ENCODE measurements at regions of chr1 and their contacts with region 1.

Region 1: GRCh38 chr1:161382214-161383019 is 14.7 kb upstream of the CFAP126 start:
- DNase-seq: no peak
- ATAC-seq: peak; percentile 94
- H3K4me3 ChIP-seq: no peak overlapping the region
- H3K27ac ChIP-seq: no peak overlapping the region
- H3K4me1 ChIP-seq: peaks cover 14% of the 10 kb centered on the region; the same call in 1 of the 2 replicates
- H3K27me3 ChIP-seq: no peaks in the 10 kb centered on the region
- CTCF ChIP-seq: peak; percentile 39 to 75 (median 54); a peak in 5 of 6 replicates
- EP300 ChIP-seq: no peak
- POLR2A ChIP-seq: no peak
- RAD21 ChIP-seq: peak; percentile 78

Region 2: DNA sequence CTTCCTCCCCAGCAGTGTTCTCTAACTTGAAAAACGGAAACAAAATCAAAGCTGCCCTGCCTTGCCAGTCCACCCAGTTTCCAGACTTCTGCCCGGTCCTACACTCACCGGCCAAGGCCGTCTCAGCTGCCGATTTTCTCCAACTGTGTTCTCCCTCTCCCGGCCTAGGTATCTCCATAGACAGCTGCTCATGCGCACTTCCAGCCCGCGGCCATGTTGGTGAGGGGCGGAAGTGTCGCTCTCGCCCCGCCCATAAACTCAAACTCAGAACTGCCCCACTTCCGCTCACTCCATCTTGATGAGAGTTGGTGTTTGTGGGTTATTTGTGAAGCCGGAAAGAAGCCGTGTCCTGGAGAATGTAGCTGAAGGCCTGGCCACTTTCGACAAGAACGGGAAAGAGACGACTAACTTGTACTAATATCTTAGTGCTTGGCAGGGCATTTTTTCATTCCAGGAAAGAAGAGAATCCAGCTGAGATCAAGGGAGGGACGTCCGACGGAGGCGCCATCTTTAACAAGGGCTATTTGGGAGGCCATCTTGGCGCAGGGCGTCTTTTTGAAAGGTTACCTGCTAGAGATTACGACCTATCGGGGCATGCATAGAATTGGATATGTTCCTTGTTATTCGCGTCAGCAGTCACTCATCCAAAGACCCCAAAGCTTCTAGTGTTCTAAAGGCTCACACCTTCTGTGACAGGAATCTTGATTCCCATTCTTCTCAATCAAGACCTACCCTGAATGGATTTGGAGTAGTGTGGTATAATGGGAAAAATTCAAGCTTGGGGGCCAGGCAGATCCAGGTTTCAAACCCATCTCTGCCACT is 336.5 kb before region 1 on chr1 and contains the start of gene USF1:
- CTCF ChIA-PET with region 1: no interaction called
- POLR2A ChIA-PET with region 1: no interaction called
- RAD21 ChIA-PET with region 1: no interaction called
- SMC1A ChIA-PET with region 1: no interaction called
- in situ Hi-C with region 1: no loop called
- intact Hi-C with region 1: no loop called
- DNase-seq: peak; percentile 92
- ATAC-seq: peak; percentile 86
- H3K4me3 ChIP-seq: peak within 1 kb of the TSS; percentile 90
- H3K27ac ChIP-seq: peak within 1 kb of the TSS; percentile 100
- H3K4me1 ChIP-seq: peaks cover 15% of the 10 kb centered on the region
- H3K27me3 ChIP-seq: no peaks in the 10 kb centered on the region
- CTCF ChIP-seq: no peak
- EP300 ChIP-seq: no peak
- POLR2A ChIP-seq: peak; percentile 90
- RAD21 ChIP-seq: no peak
- polyA plus RNA-seq, gene USF1: 9.4 to 26.3 TPM

Region 3: GRCh38 chr1:161185282-161185682 is 197.1 kb before region 1 on chr1:
- CTCF ChIA-PET with region 1: interaction called, 113 read pairs
- POLR2A ChIA-PET with region 1: interaction called, 4 read pairs
- RAD21 ChIA-PET with region 1: interaction called, 4 read pairs
- SMC1A ChIA-PET with region 1: interaction called, 13 read pairs
- in situ Hi-C with region 1: no loop called
- intact Hi-C with region 1: no loop called
- DNase-seq: peak; percentile 98
- ATAC-seq: peak; percentile 84
- H3K4me3 ChIP-seq: no peak overlapping the region
- H3K27ac ChIP-seq: peak overlapping the region; percentile 97
- H3K4me1 ChIP-seq: peaks cover 57% of the 10 kb centered on the region
- H3K27me3 ChIP-seq: no peaks in the 10 kb centered on the region
- CTCF ChIP-seq: no peak
- EP300 ChIP-seq: no peak; a peak in 1 of 4 replicates
- POLR2A ChIP-seq: peak; percentile 42; the same call in 1 of the 2 replicates
- RAD21 ChIP-seq: no peak

Region 4: DNA sequence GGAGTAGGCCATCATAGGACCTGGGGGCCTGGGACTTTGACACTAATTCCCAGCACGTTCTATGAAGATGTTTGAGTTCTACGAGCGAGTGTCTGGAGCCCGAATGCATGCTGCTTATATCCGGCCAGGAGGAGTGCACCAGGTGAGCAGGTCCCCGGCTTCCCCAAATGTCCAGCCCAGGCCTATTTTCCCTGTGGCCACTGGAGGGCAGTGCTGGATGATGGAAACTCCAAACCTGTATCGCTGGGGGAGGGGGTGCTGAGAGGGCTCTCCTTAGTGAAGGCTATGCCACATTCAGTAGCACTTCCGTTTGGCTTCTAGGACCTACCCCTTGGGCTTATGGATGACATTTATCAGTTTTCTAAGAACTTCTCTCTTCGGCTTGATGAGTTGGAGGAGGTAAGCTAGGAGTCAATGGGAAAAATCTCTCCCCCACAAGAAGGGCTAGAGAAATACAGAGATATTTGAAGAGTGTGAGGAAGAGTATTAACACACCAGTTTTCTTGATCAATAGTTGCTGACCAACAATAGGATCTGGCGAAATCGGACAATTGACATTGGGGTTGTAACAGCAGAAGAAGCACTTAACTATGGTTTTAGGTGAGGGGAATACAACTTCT is 172.5 kb before region 1 on chr1:
- CTCF ChIA-PET with region 1: interaction called, 53 read pairs
- POLR2A ChIA-PET with region 1: no interaction called
- RAD21 ChIA-PET with region 1: interaction called, 7 read pairs
- SMC1A ChIA-PET with region 1: interaction called, 62 read pairs
- in situ Hi-C with region 1: no loop called
- intact Hi-C with region 1: loop called (anchors 5 kb)
- DNase-seq: no peak
- ATAC-seq: peak; percentile 99
- H3K4me3 ChIP-seq: no peak overlapping the region
- H3K27ac ChIP-seq: no peak overlapping the region
- H3K4me1 ChIP-seq: no peaks in the 10 kb centered on the region
- H3K27me3 ChIP-seq: no peaks in the 10 kb centered on the region
- CTCF ChIP-seq: peak; percentile 88 to 94 (median 89)
- EP300 ChIP-seq: no peak
- POLR2A ChIP-seq: no peak
- RAD21 ChIP-seq: peak; percentile 93

Region 5: DNA sequence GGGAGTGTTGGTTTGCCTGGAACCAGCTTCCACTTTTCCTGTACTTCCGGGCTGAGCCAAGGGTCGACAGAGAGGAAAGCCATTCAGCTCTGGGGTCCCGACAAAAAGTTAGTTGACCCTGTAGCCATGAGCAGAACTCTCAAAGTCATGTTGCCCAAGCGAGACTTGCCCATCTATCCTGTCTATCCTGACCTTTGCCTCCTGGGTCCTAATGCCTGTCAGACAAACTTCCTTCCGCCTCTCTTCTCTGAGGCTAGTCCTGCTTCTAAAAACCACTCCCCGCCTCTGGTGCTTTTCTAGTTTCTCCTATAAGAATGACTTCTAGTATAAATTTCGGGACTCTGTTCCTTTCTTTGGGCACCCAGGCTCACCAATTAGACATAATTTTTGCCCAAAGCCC is 131.6 kb before region 1 on chr1:
- CTCF ChIA-PET with region 1: interaction called, 14 read pairs
- POLR2A ChIA-PET with region 1: no interaction called
- RAD21 ChIA-PET with region 1: no interaction called
- SMC1A ChIA-PET with region 1: no interaction called
- in situ Hi-C with region 1: no loop called
- intact Hi-C with region 1: no loop called
- DNase-seq: no peak
- ATAC-seq: no peak
- H3K4me3 ChIP-seq: no peak overlapping the region
- H3K27ac ChIP-seq: no peak overlapping the region
- H3K4me1 ChIP-seq: no peaks in the 10 kb centered on the region
- H3K27me3 ChIP-seq: no peaks in the 10 kb centered on the region
- CTCF ChIP-seq: no peak
- EP300 ChIP-seq: no peak
- POLR2A ChIP-seq: no peak
- RAD21 ChIP-seq: no peak

Region 6: DNA sequence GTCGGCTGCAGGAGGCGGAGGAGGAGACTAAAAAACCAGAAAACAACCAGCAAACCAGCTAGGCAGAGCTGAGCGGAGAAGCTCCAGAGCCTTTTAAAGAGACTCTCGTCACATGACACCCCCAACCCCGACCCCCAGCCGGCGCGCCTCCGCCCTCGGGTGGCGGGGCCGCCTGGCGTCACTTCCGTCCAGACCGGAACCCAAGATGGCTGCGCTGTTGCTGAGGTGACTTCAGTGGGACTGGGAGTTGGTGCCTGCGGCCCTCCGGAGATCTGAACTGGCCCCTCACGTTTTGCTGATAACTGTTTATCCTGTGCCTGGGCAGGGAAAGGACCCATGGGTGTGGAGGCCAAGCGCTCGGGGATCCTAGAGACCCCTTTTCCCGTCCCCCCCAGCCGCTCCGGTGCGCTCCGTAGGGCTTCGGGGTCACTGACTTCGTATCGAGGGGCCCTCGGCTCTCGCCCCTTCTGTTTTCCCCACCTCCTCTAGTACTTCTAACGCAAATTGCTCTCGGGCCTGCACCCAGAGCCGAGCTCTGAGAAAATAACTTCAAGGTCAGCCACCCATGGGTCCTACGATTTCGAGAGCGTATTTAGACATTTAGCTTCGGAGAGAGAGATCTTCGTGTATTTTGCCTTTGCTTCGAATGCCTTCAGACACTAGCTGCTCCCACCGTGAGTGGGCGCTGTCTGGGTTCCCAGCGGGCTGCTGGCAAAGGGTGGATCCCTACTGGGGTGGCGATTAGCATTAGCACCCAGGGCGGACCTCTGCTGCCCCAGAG is 68.0 kb before region 1 on chr1 and contains the start of gene SDHC:
- CTCF ChIA-PET with region 1: interaction called, 3 read pairs
- POLR2A ChIA-PET with region 1: no interaction called
- RAD21 ChIA-PET with region 1: interaction called, 4 read pairs
- SMC1A ChIA-PET with region 1: interaction called, 4 read pairs
- in situ Hi-C with region 1: no loop called
- intact Hi-C with region 1: loop called (anchors 5 kb)
- DNase-seq: no peak
- ATAC-seq: peak; percentile 99
- H3K4me3 ChIP-seq: peak within 1 kb of the TSS; percentile 80
- H3K27ac ChIP-seq: peak within 1 kb of the TSS; percentile 65
- H3K4me1 ChIP-seq: peaks cover 3% of the 10 kb centered on the region; the same call in 1 of the 2 replicates
- H3K27me3 ChIP-seq: no peaks in the 10 kb centered on the region
- CTCF ChIP-seq: peak; percentile 26 to 48 (median 43); a peak in 5 of 6 replicates
- EP300 ChIP-seq: no peak
- POLR2A ChIP-seq: peak; percentile 93
- RAD21 ChIP-seq: no peak
- polyA plus RNA-seq, gene SDHC: 115 to 340 TPM

Region 7: GRCh38 chr1:161738627-161739287 is 356.3 kb after region 1 on chr1:
- CTCF ChIA-PET with region 1: interaction called, 9 read pairs
- POLR2A ChIA-PET with region 1: no interaction called
- RAD21 ChIA-PET with region 1: interaction called, 5 read pairs
- SMC1A ChIA-PET with region 1: interaction called, 11 read pairs
- in situ Hi-C with region 1: no loop called
- intact Hi-C with region 1: no loop called
- DNase-seq: peak; percentile 93
- ATAC-seq: peak; percentile 89
- H3K4me3 ChIP-seq: no peak overlapping the region
- H3K27ac ChIP-seq: peak overlapping the region; percentile 83
- H3K4me1 ChIP-seq: peaks cover 62% of the 10 kb centered on the region
- H3K27me3 ChIP-seq: no peaks in the 10 kb centered on the region
- CTCF ChIP-seq: peak; percentile 57 to 83 (median 78)
- EP300 ChIP-seq: 0 out of 4 replicates have a peak, but pooled peaks of 1 of the 2 experiments have one; percentile 5
- POLR2A ChIP-seq: peak; percentile 56
- RAD21 ChIP-seq: peak; percentile 95